GM18951 (cell line): ENCODE measurements at regions of chr6 and their contacts with region 1.

Region 1: DNA sequence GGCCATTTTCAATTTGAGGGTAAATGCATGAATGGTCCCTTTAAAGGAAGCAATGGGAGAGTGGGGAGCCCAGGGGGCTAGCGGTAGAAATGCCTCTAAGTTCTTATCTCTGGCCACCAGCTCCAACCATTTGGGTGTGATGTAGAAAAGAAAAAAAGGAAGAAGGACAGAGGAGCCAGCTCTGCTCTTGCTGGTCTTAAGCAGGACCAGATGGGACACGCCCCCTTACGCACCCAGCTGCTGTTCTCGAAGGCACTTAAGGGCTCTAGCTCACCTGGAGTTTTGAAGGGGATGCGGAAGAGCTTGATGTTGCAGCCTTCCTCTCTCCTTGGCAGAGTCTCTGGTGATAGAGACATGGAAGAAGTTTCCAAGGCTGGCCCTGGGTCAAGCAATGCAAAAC is 59.5 kb upstream of the RNF144B start:
- POLR2A ChIP-seq: no peak

Region 2: GRCh38 chr6:18503593-18504231 is 176.1 kb after region 1 on chr6:
- in situ Hi-C with region 1: loop called (anchors 25 kb)
- POLR2A ChIP-seq: no peak

Region 3: GRCh38 chr6:18763086-18763485 is 435.5 kb after region 1 on chr6:
- in situ Hi-C with region 1: no loop called
- POLR2A ChIP-seq: no peak

Region 4: DNA sequence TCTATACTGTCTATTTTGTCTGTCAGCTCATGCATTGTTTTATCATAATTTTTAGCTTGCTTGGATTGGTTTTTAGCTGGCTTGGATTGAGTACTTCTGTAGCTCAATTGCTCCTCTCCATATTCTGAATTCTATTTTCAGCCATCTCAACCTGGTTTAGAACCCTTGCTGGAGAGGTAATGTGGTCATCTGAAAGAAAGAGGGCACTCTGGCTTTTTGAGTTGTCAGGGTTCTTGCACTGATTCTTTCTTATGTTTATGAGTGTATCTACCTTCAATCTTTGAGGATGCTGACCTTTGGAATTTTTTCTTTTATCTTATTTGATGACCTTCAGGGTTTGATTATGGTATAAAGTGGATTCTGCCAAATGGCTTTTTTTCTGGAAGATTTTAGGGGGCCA is 876.8 kb after region 1 on chr6:
- in situ Hi-C with region 1: no loop called
- POLR2A ChIP-seq: no peak